Head of caudate nucleus (tissue), 42 donors: ENCODE measurements at regions of chr15 and their contacts with region 1.

Region 1: GRCh38 chr15:97837896-97838295 is 122.6 kb upstream of the ARRDC4 start:
- DNase-seq: no peak

Region 2: GRCh38 chr15:97893967-97894366 is 56.1 kb after region 1 on chr15:
- intact Hi-C with region 1: loop called (anchors 10 kb)
- DNase-seq: no peak

Region 3: GRCh38 chr15:97921296-97921865 is 83.5 kb after region 1 on chr15:
- intact Hi-C with region 1: no loop called
- DNase-seq: no peak

Region 4: DNA sequence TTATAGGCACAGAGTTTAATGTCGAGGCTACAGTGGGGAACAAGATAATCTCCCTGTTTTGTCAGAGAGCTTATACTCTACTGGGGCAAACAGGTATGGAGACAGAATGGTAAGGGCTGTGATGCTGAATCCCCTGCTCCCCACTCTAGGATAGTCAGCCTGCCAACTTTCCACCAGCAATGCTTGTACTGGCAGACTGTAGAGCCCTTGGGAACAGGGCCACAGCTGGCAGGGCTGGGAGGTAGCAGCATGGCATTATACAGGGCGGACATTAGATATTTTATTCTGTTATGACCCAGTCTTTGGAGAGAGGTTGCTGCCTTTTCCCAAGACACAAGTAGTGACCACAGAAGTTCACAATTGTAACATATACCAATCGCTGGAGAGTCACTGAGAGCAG is 213.8 kb after region 1 on chr15:
- intact Hi-C with region 1: no loop called
- DNase-seq: no peak